ENCODE measurements at regions of chr6 and their contacts with region 1.

Region 1: GRCh38 chr6:36780442-36781177 is 58.6 kb downstream of the CPNE5 start:
- DNase-seq: no peak
- H3K4me3 Mint-ChIP-seq: no peak overlapping the region
- H3K27ac Mint-ChIP-seq: no peak overlapping the region
- H3K4me1 Mint-ChIP-seq: peaks cover 9% of the 10 kb centered on the region
- H3K27me3 Mint-ChIP-seq: peaks cover 54% of the 10 kb centered on the region
- CTCF ChIP-seq: no peak

Region 2: DNA sequence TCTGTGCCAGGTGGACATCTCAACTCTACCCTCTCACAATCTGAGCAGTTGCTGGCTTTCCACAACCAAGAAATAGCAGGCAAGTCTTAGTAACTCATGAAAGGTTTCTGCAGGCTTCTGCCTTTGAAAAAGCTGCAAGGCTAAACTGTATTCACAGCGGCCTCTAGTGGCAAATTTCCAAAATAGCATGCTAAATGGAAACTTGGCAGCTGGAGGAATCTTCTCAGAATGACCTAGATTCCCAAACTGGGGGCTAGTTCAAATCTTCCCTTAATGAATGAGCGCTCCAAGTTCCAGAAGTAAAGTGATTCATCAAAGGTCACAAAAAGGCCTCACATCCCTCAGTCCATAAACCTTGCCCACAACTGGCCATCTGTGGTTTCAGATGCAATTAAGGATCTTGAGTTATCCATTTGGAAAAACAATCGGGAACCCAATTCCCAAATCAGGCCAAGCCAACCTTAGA is 70.6 kb after region 1 on chr6:
- CTCF ChIA-PET with region 1: interaction called, 13 read pairs
- intact Hi-C with region 1: loop called (anchors 5 kb)
- DNase-seq: peak; percentile 49
- H3K4me3 Mint-ChIP-seq: no peak overlapping the region
- H3K27ac Mint-ChIP-seq: no peak overlapping the region
- H3K4me1 Mint-ChIP-seq: peaks cover 41% of the 10 kb centered on the region
- H3K27me3 Mint-ChIP-seq: peaks cover 3% of the 10 kb centered on the region
- CTCF ChIP-seq: peak; percentile 46